Activated CD4-positive, alpha-beta T cell treated with anti-CD3 and anti-CD28 coated beads, Interleukin-2, amount 10 ng/mL, durations not matched to agents 24 days and 14 days (primary cell): ENCODE measurements at regions of chr2 and their contacts with region 1.

Region 1: DNA sequence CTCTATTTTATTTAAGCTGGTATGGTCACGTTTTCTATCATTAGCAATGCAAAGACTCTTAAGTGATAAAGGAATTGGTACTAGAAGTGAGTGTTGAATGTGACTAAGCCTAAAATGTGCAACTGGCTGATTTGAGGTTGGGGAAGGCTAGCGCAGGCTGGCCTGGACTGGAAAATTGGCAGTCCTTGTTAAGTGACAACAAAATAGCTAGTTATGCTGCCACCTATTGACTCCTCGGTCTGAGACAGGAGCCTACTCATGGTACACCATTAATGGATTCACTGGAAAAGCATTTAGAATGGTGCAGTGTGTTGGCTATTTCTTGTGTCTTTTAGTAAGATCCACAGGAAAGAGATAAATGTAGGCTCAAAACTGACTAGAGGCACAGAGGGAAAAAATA is 5.7 kb upstream of the WIPF1 start:
- DNase-seq: peak; percentile 84
- H3K4me3 Mint-ChIP-seq: no peak overlapping the region
- H3K27ac Mint-ChIP-seq: peak overlapping the region; percentile 81
- H3K4me1 Mint-ChIP-seq: peaks cover 78% of the 10 kb centered on the region
- H3K27me3 Mint-ChIP-seq: no peaks in the 10 kb centered on the region

Region 2: GRCh38 chr2:174465327-174465726 is 138.0 kb before region 1 on chr2:
- intact Hi-C with region 1: loop called (anchors 2 kb)
- DNase-seq: no peak
- H3K4me3 Mint-ChIP-seq: no peak overlapping the region
- H3K27ac Mint-ChIP-seq: no peak overlapping the region
- H3K4me1 Mint-ChIP-seq: no peaks in the 10 kb centered on the region
- H3K27me3 Mint-ChIP-seq: no peaks in the 10 kb centered on the region

Region 3: DNA sequence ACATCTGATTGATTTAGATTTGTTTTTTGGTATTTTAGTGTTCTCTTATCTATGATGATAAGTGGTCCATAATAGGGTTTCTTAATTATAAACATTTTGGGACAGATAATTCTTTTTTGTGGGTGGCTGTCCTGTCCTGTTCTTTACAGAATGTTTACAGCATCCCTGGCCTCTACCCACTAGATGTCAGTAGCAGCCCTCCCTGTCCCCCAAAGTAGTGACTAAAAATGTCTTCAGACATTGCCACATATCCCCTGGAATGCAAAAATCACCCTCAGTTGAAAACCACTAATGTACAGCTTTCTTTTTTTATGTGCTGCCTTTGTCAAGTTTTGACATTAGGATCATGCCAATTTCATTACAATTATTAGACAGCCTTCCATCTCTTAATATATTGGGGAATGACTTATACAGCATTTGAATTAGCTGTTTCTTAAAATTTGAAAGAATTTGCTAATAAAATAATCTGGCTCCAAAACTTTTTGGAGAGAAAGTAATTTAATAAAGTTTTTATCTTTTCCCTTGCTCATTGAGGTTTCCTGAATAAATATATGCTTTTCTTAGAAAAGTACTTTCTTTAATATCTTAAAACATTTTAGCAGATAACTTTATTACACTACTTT is 25.2 kb before region 1 on chr2:
- intact Hi-C with region 1: loop called (anchors 1 kb)
- DNase-seq: peak; percentile 84
- H3K4me3 Mint-ChIP-seq: no peak overlapping the region
- H3K27ac Mint-ChIP-seq: no peak overlapping the region
- H3K4me1 Mint-ChIP-seq: peaks cover 51% of the 10 kb centered on the region
- H3K27me3 Mint-ChIP-seq: no peaks in the 10 kb centered on the region

Region 4: GRCh38 chr2:174682578-174683391 is 79.5 kb after region 1 on chr2:
- intact Hi-C with region 1: loop called (anchors 1 kb)
- DNase-seq: peak; percentile 89
- H3K4me3 Mint-ChIP-seq: peak overlapping the region; percentile 92
- H3K27ac Mint-ChIP-seq: peak overlapping the region; percentile 97
- H3K4me1 Mint-ChIP-seq: peaks cover 50% of the 10 kb centered on the region
- H3K27me3 Mint-ChIP-seq: no peaks in the 10 kb centered on the region

Region 5: GRCh38 chr2:174835797-174836255 is 232.5 kb after region 1 on chr2:
- intact Hi-C with region 1: loop called (anchors 10 kb)
- DNase-seq: peak; percentile 60
- H3K4me3 Mint-ChIP-seq: peak overlapping the region; percentile 72
- H3K27ac Mint-ChIP-seq: peak overlapping the region; percentile 99
- H3K4me1 Mint-ChIP-seq: peaks cover 30% of the 10 kb centered on the region
- H3K27me3 Mint-ChIP-seq: no peaks in the 10 kb centered on the region